ENCODE measurements at regions of chr20 and their contacts with region 1.

Region 1: DNA sequence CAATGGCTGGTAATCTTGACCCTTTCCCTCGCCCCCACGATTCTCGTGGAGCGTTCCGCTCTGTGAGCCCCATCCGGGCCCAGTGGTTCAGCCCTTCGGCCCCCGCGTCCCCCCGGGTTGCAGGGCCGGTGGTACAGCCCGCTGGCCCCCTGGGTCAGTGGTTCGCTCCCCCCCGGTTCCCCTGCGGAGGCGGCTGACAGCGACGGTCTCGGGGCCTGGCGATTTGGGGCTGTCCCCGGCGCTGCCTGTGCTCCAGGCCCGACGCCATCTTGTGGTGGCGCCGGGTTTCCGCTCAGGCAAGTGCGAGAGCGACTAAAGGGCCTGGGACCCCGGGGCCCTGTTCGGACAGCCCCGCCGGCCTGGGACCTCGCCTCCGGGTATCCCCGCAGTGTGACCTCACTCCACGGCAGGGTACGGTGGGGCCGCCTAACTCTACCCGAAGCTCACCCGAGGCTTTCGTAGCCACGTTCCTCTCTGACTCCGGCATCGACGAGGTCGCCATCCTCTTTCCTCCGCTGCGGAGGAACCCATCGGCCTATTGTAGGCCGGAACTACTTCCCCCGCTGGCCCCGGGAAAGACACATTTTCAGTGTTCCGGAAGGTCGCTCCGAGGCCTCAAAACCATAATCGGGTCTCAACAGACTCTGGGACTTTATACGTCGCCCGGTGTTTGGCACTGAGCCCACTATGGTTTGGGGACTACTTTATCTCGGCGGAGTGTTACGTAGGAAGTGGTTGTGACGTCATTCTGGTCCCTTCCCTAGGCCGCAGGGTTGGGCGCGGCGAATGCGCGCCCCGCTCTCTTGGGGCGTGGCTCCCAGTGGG is at the start of gene ZNF335:
- DNase-seq: peak; percentile 99
- H3K4me3 ChIP-seq: peak within 1 kb of the TSS; percentile 65 to 99 (median 92)
- H3K27ac ChIP-seq: peak within 1 kb of the TSS; percentile 94 to 100 (median 99)
- H3K4me1 ChIP-seq: peaks cover 15 to 48% (median 39%) of the 10 kb centered on the region in 6 donors
- H3K27me3 ChIP-seq: no peaks in the 10 kb centered on the region
- CTCF ChIP-seq: peak; percentile 10 to 76 (median 58)
- POLR2A ChIP-seq: peak; percentile 13 to 92 (median 55)
- total RNA-seq, gene ZNF335: 25.9 to 46.3 (median 33.8) TPM

Region 2: DNA sequence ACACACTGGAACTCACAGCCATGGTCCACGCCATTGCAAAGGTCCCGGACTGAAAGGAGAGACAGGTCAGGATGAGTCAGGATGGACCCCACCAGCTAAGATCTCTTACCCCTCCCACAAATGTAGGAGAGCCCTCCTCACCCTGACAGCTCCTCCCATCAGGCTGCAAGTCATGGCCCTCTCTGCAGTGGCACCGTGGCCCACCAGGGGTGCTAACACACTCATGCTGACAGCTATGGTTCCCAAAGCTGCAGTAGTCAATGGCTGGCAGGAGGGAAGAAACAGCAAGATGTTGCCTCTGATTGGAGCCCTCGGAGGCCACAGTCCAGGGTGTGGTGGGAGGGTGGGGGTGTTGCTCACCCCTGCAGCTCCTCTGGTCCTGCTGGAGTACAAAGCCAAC is 670.9 kb before region 1 on chr20:
- intact Hi-C with region 1: no loop called
- DNase-seq: no peak
- H3K4me3 ChIP-seq: no peak overlapping the region
- H3K27ac ChIP-seq: no peak overlapping the region
- H3K4me1 ChIP-seq: no peaks in the 10 kb centered on the region
- H3K27me3 ChIP-seq: peaks cover 0 to 72% (median 12%) of the 10 kb centered on the region in 7 donors
- CTCF ChIP-seq: peak in 4 of 11 experiments; percentile 9 to 40 (median 24)
- POLR2A ChIP-seq: no peak

Region 3: GRCh38 chr20:45812157-45813020 is 159.5 kb before region 1 on chr20 and contains the start of gene UBE2C:
- intact Hi-C with region 1: loop called (anchors 10 kb)
- DNase-seq: peak; percentile 95
- H3K4me3 ChIP-seq: peak within 1 kb of the TSS; percentile 48 to 87 (median 66)
- H3K27ac ChIP-seq: peak within 1 kb of the TSS in 5 of 8 donors; percentile 40 to 71 (median 45)
- H3K4me1 ChIP-seq: peaks cover 6 to 26% (median 17%) of the 10 kb centered on the region in 6 donors
- H3K27me3 ChIP-seq: no peaks in the 10 kb centered on the region
- CTCF ChIP-seq: peak in 1 of 11 experiments; percentile 14
- POLR2A ChIP-seq: no peak
- total RNA-seq, gene UBE2C: 3.0 to 22.2 (median 12.3) TPM

Region 4: DNA sequence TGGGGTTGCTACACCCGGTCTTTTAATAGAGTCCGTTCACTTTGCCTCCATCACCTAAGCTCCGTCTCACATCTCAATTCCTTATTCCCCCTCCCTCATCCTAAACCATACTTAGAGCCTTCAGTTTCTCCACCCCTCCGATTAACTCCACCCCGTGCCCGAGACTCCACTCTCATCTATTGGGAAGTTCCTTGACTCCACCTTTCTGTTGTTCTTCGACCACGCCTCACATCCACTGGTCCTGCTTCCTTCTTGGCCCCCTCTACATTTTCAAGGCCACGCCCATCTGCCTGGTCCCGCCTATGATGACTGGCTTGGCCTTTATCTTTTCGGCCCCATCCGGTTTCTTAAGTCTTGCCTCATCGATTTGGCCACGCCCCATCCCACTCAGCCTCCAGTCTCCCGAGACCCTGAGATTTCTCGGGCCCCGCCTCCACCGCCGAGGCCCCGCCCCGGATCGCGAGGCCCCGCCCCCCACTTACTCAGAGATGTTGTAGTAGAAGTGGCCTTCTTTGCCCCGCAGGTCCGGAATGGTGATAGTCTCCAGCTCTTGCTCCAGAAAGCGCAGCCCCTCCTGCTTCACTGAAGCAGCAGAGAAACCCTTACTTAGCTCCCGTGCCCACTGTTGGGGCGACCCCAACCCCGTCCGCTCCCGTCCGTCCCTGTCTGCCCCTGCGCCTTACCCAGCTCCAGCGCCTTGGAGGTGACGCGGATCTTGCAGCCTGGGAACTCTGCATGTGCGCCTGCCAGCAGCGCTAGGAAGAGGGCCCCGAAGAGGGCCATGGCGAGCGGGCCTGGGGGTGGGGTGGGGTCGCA is 61.0 kb before region 1 on chr20:
- intact Hi-C with region 1: no loop called
- DNase-seq: peak; percentile 97
- H3K4me3 ChIP-seq: peak overlapping the region; percentile 31 to 78 (median 46)
- H3K27ac ChIP-seq: peak overlapping the region in 7 of 8 donors; percentile 51 to 86 (median 79)
- H3K4me1 ChIP-seq: peaks cover 14 to 59% (median 34%) of the 10 kb centered on the region in 6 donors
- H3K27me3 ChIP-seq: peaks cover 0 to 36% (median 5%) of the 10 kb centered on the region in 7 donors
- CTCF ChIP-seq: peak in 2 of 11 experiments; percentile 12 to 27
- POLR2A ChIP-seq: no peak

Region 5: GRCh38 chr20:45934586-45935415 is 37.1 kb before region 1 on chr20 and contains the start of gene PCIF1:
- intact Hi-C with region 1: loop called (anchors 5 kb)
- DNase-seq: peak; percentile 98
- H3K4me3 ChIP-seq: peak within 1 kb of the TSS; percentile 66 to 94 (median 88)
- H3K27ac ChIP-seq: peak within 1 kb of the TSS; percentile 99 to 100 (median 100)
- H3K4me1 ChIP-seq: peaks cover 12 to 49% (median 31%) of the 10 kb centered on the region in 6 donors
- H3K27me3 ChIP-seq: no peaks in the 10 kb centered on the region
- CTCF ChIP-seq: peak in 3 of 11 experiments; percentile 9 to 18 (median 13)
- POLR2A ChIP-seq: peak; percentile 48 to 84 (median 68)
- total RNA-seq, gene PCIF1: 41.2 to 61.9 (median 52.4) TPM

Region 6: DNA sequence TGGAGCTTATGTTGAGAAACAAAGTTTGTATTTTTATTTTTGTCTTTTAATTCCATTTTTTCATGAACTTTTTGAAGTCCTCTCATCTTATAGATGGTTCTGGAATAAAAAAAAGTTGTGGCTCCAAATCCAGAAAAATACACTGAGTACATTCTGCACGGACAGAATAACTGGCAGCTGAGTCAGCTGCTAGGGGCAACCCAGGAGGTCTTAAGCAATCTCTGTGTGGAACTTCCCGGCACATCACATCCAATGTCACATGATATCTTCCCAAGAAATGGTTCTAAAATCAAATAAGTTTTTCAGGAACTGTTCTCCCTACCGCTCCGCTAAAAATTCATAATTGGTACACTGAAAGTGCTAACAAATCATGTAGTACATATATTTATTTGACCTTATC is 649.6 kb after region 1 on chr20:
- intact Hi-C with region 1: no loop called
- DNase-seq: no peak
- H3K4me3 ChIP-seq: no peak overlapping the region
- H3K27ac ChIP-seq: no peak overlapping the region
- H3K4me1 ChIP-seq: no peaks in the 10 kb centered on the region
- H3K27me3 ChIP-seq: peaks cover 0 to 27% (median 0%) of the 10 kb centered on the region in 7 donors
- CTCF ChIP-seq: no peak
- POLR2A ChIP-seq: no peak